Gastrocnemius medialis (tissue), 4 donors: ENCODE measurements at regions of chr2 and their contacts with region 1.

Region 1: GRCh38 chr2:219206442-219207253 is at the start of gene ZFAND2B:
- DNase-seq: peak; percentile 90 to 92
- ATAC-seq: peak; percentile 93 to 95
- H3K4me3 ChIP-seq: peak within 1 kb of the TSS; percentile 71 to 94 (median 84)
- H3K27ac ChIP-seq: peak within 1 kb of the TSS; percentile 87 to 99 (median 98)
- H3K4me1 ChIP-seq: peaks cover 16 to 21% of the 10 kb centered on the region in 2 donors
- H3K27me3 ChIP-seq: no peaks in the 10 kb centered on the region
- CTCF ChIP-seq: peak in 4 of 5 experiments; percentile 14 to 43 (median 18)
- POLR2A ChIP-seq: peak; percentile 89 to 93
- total RNA-seq, gene ZFAND2B: 33.2 to 60.8 (median 41.2) TPM

Region 2: DNA sequence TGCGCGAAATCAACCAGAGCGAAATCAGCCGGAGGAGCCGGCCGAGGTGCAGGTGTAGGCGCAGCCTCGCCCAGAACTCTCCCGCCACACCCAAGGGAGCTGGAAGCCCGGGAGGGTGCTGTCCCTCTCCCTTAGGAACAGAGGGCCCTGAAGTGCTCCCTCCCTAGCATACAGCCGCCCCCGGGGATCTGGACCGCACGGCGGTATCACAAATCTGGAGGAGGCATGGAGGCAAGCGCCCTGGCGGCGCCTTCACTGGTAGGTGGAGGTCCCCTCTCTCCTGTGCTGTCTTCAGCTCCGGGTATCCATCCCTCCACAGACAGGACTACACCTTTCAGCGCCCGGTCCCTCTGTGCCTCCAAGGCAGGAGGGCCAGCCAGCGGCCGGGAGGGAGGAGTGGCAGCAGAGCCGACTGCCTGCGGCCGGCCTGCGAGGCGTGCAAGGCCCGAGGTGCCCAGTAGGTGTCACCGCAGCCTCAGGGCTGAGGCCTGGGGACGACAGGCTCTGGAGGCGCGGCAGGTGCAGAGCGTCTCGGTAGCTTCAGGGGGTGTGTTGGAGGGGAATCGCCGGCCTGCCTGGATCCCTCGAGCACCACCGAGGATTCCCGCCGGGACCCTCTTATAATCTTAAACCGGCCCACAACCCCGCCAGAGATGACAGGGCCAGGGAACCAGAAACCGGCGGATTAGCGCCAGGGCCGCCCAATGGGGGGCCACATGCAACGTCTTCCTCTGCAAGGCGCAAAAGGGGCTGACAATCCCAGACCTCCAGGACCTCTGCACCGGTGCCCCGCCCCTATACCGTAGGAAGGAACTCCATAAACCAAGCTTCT is 148.7 kb before region 1 on chr2:
- in situ Hi-C with region 1: no loop called
- intact Hi-C with region 1: no loop called
- DNase-seq: peak; percentile 36 to 54
- ATAC-seq: peak; percentile 73 to 81
- H3K4me3 ChIP-seq: peak overlapping the region in 2 of 4 donors; percentile 10 to 40
- H3K27ac ChIP-seq: no peak overlapping the region
- H3K4me1 ChIP-seq: peaks cover 13 to 24% of the 10 kb centered on the region in 2 donors
- H3K27me3 ChIP-seq: peaks cover 70 to 81% (median 76%) of the 10 kb centered on the region in 3 donors
- CTCF ChIP-seq: peak; percentile 88 to 98 (median 93)
- POLR2A ChIP-seq: no peak

Region 3: GRCh38 chr2:219171231-219171651 is 35.4 kb before region 1 on chr2:
- in situ Hi-C with region 1: loop called in 2 of 4 experiments (anchors 5 kb)
- intact Hi-C with region 1: no loop called
- DNase-seq: peak; percentile 80 to 82
- ATAC-seq: peak; percentile 82 to 88
- H3K4me3 ChIP-seq: no peak overlapping the region
- H3K27ac ChIP-seq: peak overlapping the region; percentile 68 to 84 (median 76)
- H3K4me1 ChIP-seq: peaks cover 14 to 19% of the 10 kb centered on the region in 2 donors
- H3K27me3 ChIP-seq: no peaks in the 10 kb centered on the region
- CTCF ChIP-seq: peak; percentile 51 to 78 (median 76)
- POLR2A ChIP-seq: peak; percentile 12 to 24

Region 4: GRCh38 chr2:219177552-219178376 is 28.9 kb before region 1 on chr2 and contains the start of gene RETREG2:
- in situ Hi-C with region 1: loop called in 2 of 4 experiments (anchors 5 kb)
- intact Hi-C with region 1: loop called (anchors 1 kb)
- DNase-seq: peak; percentile 86 to 89
- ATAC-seq: peak; percentile 85 to 90
- H3K4me3 ChIP-seq: peak within 1 kb of the TSS; percentile 87 to 96 (median 95)
- H3K27ac ChIP-seq: peak within 1 kb of the TSS; percentile 94 to 99 (median 99)
- H3K4me1 ChIP-seq: peaks cover 17 to 21% of the 10 kb centered on the region in 2 donors
- H3K27me3 ChIP-seq: no peaks in the 10 kb centered on the region
- CTCF ChIP-seq: peak; percentile 25 to 72 (median 66)
- POLR2A ChIP-seq: peak; percentile 96 to 99
- total RNA-seq, gene RETREG2: 39.8 to 57.2 (median 44.9) TPM

Region 5: GRCh38 chr2:219218732-219219701 is 12.4 kb after region 1 on chr2 and contains the start of gene ABCB6:
- in situ Hi-C with region 1: no loop called
- intact Hi-C with region 1: loop called (anchors 1 kb)
- DNase-seq: peak; percentile 96 to 98
- ATAC-seq: peak; percentile 82 to 84
- H3K4me3 ChIP-seq: peak within 1 kb of the TSS; percentile 55 to 74 (median 64)
- H3K27ac ChIP-seq: peak within 1 kb of the TSS; percentile 87 to 99 (median 94)
- H3K4me1 ChIP-seq: peaks cover 19 to 29% of the 10 kb centered on the region in 2 donors
- H3K27me3 ChIP-seq: no peaks in the 10 kb centered on the region
- CTCF ChIP-seq: no peak
- POLR2A ChIP-seq: peak; percentile 54 to 78
- total RNA-seq, gene ABCB6: 15.0 to 45.8 (median 31.8) TPM

Region 6: DNA sequence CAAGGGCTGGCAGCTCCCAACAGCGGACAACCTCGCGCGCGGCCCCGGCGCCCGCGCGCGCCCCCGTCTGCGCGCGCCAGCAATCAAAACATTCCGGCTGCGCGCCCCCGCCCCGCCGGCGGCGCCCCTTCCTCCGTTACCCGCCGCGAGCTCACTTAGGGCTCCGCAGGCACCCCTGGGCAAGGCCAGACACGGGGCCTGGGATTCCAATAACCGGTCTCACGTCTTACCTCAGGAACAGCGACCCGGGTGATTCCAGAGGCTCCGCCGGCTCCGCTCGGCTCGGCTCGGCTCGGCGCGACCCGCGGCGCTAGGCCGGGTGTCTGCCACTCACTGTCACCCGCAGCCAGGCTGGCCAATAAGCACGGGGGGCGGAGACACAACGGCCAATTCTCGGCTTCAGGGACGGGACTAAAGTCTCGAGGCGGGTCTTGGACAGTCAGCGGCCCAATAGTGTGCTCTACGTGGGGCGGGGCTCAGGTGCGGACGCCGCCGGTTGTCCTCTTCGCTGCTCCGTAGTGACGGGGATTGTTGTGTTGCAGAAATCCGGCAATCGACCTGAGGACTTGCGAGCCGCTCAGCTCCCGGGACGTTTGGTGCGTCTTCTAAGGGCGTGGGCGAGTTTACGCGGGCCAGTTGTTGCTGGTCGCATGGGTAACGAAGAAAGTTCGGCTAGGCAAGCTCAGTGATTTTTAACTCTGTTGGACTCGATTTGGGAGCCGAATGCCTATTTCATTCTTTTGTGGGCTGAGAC is 22.8 kb after region 1 on chr2 and contains the starts of genes ANKZF1 and ATG9A:
- in situ Hi-C with region 1: no loop called
- intact Hi-C with region 1: loop called (anchors 1 kb)
- DNase-seq: peak; percentile 99 to 100
- ATAC-seq: peak; percentile 96 to 98
- H3K4me3 ChIP-seq: peak within 1 kb of the TSS; percentile 73 to 95 (median 90)
- H3K27ac ChIP-seq: peak within 1 kb of the TSS; percentile 85 to 99 (median 90)
- H3K4me1 ChIP-seq: peaks cover 22 to 27% of the 10 kb centered on the region in 2 donors
- H3K27me3 ChIP-seq: no peaks in the 10 kb centered on the region
- CTCF ChIP-seq: peak in 1 of 5 experiments; percentile 17
- POLR2A ChIP-seq: peak; percentile 93 to 95
- total RNA-seq, gene ANKZF1: 13.0 to 23.0 (median 19.1) TPM
- total RNA-seq, gene ATG9A: 111 to 208 (median 176) TPM

Region 7: DNA sequence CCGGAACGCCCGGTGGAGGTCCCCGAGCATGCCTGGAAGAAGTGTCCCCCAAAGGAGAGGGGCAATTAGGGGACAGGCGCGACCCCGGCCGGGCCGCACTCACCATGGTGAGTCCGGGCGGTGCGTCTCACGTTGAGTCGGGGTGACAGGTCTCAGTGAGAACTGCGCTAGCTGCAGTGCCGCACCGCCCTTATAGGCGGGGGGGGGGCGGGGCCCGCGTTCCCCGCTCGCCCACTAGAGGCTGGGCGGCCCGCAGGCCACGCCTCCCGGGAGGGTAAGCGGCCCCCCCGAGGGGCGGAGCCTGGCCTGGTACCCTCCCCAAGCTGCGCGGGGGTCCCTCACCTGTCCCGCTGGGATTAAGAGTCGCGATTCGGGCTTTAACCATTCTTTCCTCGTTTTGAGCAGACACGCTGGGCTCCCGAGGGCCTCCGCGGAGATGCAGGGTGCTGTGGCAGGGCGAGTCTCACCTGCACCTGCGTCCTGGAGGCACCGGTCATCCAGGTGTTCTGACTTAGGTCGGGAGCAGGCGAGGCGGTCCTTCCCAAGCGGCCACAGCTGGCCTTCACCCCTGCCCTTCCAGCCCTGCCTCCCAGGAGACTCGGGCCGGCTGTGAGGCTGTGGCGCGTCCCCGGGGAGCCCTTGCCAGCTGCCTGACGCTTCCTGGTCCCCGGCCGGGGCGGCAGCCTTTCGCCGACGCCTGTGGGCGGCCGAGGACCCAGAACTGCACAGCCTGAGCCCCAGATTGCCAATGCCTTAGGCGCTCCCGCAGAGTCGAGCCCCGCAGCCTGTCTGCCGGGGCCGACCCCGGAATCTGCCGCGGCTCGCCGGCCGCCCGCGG is 47.3 kb after region 1 on chr2 and contains the start of gene TUBA4A:
- in situ Hi-C with region 1: no loop called
- intact Hi-C with region 1: loop called (anchors 1 kb)
- DNase-seq: peak; percentile 76 to 88
- ATAC-seq: peak; percentile 69 to 72
- H3K4me3 ChIP-seq: peak within 1 kb of the TSS; percentile 68 to 88 (median 76)
- H3K27ac ChIP-seq: peak within 1 kb of the TSS; percentile 91 to 99 (median 96)
- H3K4me1 ChIP-seq: peaks cover 36 to 53% of the 10 kb centered on the region in 2 donors
- H3K27me3 ChIP-seq: no peaks in the 10 kb centered on the region
- CTCF ChIP-seq: peak in 3 of 5 experiments; percentile 23 to 34 (median 30)
- POLR2A ChIP-seq: peak; percentile 98
- total RNA-seq, gene TUBA4A: 351 to 797 (median 386) TPM